Psoas muscle (tissue), 8 donors: ENCODE measurements at regions of chr5 and their contacts with region 1.

Region 1: DNA sequence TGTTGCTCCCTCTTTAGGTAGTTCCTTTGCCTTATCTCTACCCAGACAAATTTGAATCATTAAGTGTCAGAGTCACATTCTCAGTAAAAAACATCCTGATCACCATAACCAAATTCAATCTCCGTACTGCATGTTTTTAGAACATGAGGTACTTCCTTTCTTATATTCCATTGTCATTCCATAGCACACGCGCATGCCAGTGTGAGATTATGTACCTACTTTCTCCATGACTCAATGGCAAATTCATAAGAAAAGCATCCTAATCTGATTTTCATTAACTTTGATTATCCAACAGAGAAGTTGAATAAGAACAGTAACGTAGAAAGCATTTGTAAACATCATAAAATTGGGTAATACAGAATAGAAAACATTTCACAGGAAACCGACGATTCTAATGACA is 1118.6 kb upstream of the CDH9 start:
- DNase-seq: no peak
- ATAC-seq: no peak
- H3K4me3 ChIP-seq: no peak overlapping the region
- H3K27ac ChIP-seq: no peak overlapping the region
- H3K4me1 ChIP-seq: no peaks in the 10 kb centered on the region
- H3K27me3 ChIP-seq: no peaks in the 10 kb centered on the region
- CTCF ChIP-seq: no peak

Region 2: GRCh38 chr5:28143519-28143918 is 13.5 kb before region 1 on chr5:
- intact Hi-C with region 1: loop called in 1 of 2 experiments (anchors 1 kb)
- DNase-seq: no peak
- ATAC-seq: no peak
- H3K4me3 ChIP-seq: no peak overlapping the region
- H3K27ac ChIP-seq: no peak overlapping the region
- H3K4me1 ChIP-seq: no peaks in the 10 kb centered on the region
- H3K27me3 ChIP-seq: no peaks in the 10 kb centered on the region
- CTCF ChIP-seq: no peak

Region 3: GRCh38 chr5:28430565-28431178 is 273.7 kb after region 1 on chr5:
- intact Hi-C with region 1: no loop called
- DNase-seq: no peak
- ATAC-seq: no peak
- H3K4me3 ChIP-seq: no peak overlapping the region
- H3K27ac ChIP-seq: no peak overlapping the region
- H3K4me1 ChIP-seq: no peaks in the 10 kb centered on the region
- H3K27me3 ChIP-seq: no peaks in the 10 kb centered on the region
- CTCF ChIP-seq: no peak